CD4-positive, alpha-beta memory T cell (primary cell): ENCODE measurements at regions of chr11 and their contacts with region 1.

Region 1: GRCh38 chr11:117817368-117818040 is 7.0 kb downstream of the FXYD2 start:
- DNase-seq: peak; percentile 75 to 82 (median 79)
- H3K4me3 ChIP-seq: no peak overlapping the region
- H3K4me3 Mint-ChIP-seq: peak overlapping the region in 5 of 8 donors; percentile 43 to 74 (median 61)
- H3K27ac ChIP-seq: peak overlapping the region; percentile 74
- H3K27ac Mint-ChIP-seq: peak overlapping the region; percentile 80 to 94 (median 93)
- H3K4me1 ChIP-seq: peaks cover 52% of the 10 kb centered on the region
- H3K4me1 Mint-ChIP-seq: peaks cover 26 to 69% (median 45%) of the 10 kb centered on the region in 4 donors
- H3K27me3 ChIP-seq: no peaks in the 10 kb centered on the region
- H3K27me3 Mint-ChIP-seq: no peaks in the 10 kb centered on the region

Region 2: DNA sequence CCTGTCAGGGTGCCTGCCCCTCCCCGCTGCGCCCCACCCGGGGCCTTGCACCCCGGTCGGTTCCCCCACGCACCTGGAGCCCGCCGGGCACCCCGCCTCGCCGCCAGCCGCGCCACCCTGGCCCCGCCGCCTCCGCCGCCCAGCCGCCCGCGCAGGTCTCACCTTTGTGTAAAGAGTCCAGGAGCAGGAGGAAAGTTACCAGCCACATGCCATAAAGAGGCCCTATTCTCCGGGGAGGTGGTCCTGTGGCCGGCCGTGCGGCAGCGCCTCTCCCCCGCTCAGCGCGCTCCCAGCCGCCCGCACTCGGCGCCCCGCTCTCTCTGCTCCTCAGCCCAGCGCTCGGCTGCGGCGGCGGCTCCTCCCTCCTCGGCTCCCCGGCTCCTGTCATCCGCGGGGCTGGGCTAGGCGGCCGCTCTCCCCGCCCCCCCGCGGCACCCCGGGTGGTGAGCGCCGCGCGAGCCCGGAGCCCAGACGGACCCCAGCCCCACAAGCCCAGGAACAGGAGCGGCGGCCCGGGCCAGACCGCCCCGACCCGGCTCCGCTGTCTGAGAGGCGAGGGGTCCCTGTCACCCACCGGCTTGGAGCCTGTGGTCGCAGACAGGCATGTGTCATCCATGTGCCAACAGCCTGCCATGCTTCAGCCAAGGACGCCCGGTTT is 20.5 kb before region 1 on chr11 and contains the start of gene DSCAML1:
- CTCF ChIA-PET with region 1: interaction called, 440 read pairs
- POLR2A ChIA-PET with region 1: interaction called, 9 read pairs
- intact Hi-C with region 1: loop called (anchors 2 kb)
- DNase-seq: peak in 4 of 5 donors; percentile 34 to 42 (median 36)
- H3K4me3 ChIP-seq: peak within 1 kb of the TSS in 1 of 2 donors; percentile 28
- H3K4me3 Mint-ChIP-seq: peak within 1 kb of the TSS; percentile 42 to 86 (median 72)
- H3K27ac ChIP-seq: no peak within 1 kb of the TSS
- H3K27ac Mint-ChIP-seq: peak within 1 kb of the TSS in 2 of 7 donors; percentile 30 to 54
- H3K4me1 ChIP-seq: peaks cover 18% of the 10 kb centered on the region
- H3K4me1 Mint-ChIP-seq: peaks cover 2 to 22% (median 12%) of the 10 kb centered on the region in 4 donors
- H3K27me3 ChIP-seq: peaks cover 38% of the 10 kb centered on the region
- H3K27me3 Mint-ChIP-seq: peaks cover 41 to 45% of the 10 kb centered on the region in 2 donors
- total RNA-seq, gene DSCAML1: 1.00 to 1.0 TPM

Region 3: DNA sequence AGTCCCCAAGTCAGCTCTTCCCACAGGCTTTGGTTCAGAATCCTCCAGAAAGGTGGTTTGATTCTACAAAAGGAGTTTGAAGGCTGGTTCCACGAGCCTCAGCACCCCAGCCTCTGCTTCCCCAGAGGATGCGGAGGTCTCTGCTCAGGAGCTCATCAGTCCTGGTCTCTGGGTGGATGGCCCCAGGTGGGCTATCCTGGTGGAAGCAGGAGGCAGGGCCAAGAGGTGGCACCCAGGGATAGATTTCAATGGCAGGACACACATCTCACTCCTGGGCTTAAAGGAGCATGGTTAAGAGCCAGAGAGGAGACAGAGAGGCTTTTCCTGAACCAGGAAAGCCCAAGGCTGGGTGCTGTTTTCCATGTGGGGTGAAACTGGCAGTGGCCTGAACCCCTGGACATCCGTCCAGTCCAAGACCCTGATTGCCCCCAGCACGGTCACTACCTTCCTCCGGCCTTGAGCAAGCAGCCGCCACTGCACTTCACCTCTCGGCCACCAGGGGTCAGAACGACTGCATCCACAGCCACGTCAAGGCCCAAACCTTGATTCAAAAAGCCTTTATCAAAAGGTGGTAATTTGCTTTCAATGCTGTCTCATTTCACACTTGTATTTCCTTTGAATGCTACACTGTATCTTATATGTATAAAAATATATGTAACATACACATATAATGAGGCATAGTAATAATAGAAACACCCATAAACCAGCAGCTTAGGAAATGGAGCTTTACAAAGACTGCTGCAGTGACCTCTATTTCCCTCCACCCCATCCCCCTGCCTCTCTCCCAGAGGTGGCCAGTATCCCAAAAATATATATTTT is 26.4 kb after region 1 on chr11:
- CTCF ChIA-PET with region 1: interaction called, 14 read pairs
- POLR2A ChIA-PET with region 1: no interaction called
- intact Hi-C with region 1: no loop called
- DNase-seq: peak; percentile 72 to 79 (median 76)
- H3K4me3 ChIP-seq: no peak overlapping the region
- H3K4me3 Mint-ChIP-seq: no peak overlapping the region
- H3K27ac ChIP-seq: no peak overlapping the region
- H3K27ac Mint-ChIP-seq: peak overlapping the region in 2 of 7 donors; percentile 56 to 79
- H3K4me1 ChIP-seq: peaks cover 4% of the 10 kb centered on the region
- H3K4me1 Mint-ChIP-seq: peaks cover 0 to 8% (median 2%) of the 10 kb centered on the region in 4 donors
- H3K27me3 ChIP-seq: no peaks in the 10 kb centered on the region
- H3K27me3 Mint-ChIP-seq: no peaks in the 10 kb centered on the region

Region 4: DNA sequence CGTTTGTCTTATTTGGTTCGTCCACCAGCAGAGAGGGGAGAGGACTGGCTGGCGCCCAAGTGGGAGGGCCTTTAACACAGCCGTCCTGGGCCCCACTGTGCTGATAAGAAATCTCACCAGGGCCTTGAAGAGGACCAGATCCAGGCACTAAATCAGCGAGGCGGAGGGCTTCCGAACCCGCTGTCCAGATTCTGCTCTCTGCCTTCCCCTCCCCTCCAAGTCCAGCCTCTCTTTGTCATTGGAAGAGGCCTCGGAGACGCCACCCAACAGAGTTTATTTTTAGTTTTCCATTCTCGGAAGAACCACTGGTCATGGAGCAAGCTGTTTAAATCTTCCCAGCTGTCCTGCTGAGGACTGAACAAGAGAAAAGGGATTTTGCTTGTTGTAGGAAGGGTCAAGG is 68.3 kb after region 1 on chr11:
- CTCF ChIA-PET with region 1: no interaction called
- POLR2A ChIA-PET with region 1: no interaction called
- intact Hi-C with region 1: no loop called
- DNase-seq: no peak
- H3K4me3 ChIP-seq: no peak overlapping the region
- H3K4me3 Mint-ChIP-seq: no peak overlapping the region
- H3K27ac ChIP-seq: no peak overlapping the region
- H3K27ac Mint-ChIP-seq: no peak overlapping the region
- H3K4me1 ChIP-seq: no peaks in the 10 kb centered on the region
- H3K4me1 Mint-ChIP-seq: no peaks in the 10 kb centered on the region
- H3K27me3 ChIP-seq: peaks cover 3% of the 10 kb centered on the region
- H3K27me3 Mint-ChIP-seq: peaks cover 10 to 11% of the 10 kb centered on the region in 2 donors

Region 5: GRCh38 chr11:118002541-118003423 is 185.3 kb after region 1 on chr11:
- CTCF ChIA-PET with region 1: interaction called, 5 read pairs
- POLR2A ChIA-PET with region 1: interaction called, 41 read pairs
- intact Hi-C with region 1: no loop called
- DNase-seq: peak; percentile 26 to 68 (median 32)
- H3K4me3 ChIP-seq: peak overlapping the region; percentile 5 to 14
- H3K4me3 Mint-ChIP-seq: peak overlapping the region; percentile 56 to 82 (median 70)
- H3K27ac ChIP-seq: peak overlapping the region; percentile 53
- H3K27ac Mint-ChIP-seq: peak overlapping the region; percentile 86 to 96 (median 91)
- H3K4me1 ChIP-seq: peaks cover 100% of the 10 kb centered on the region
- H3K4me1 Mint-ChIP-seq: peaks cover 76 to 100% (median 95%) of the 10 kb centered on the region in 4 donors
- H3K27me3 ChIP-seq: no peaks in the 10 kb centered on the region
- H3K27me3 Mint-ChIP-seq: no peaks in the 10 kb centered on the region